ENCODE measurements at regions of chr3 and their contacts with region 1.

Region 1: DNA sequence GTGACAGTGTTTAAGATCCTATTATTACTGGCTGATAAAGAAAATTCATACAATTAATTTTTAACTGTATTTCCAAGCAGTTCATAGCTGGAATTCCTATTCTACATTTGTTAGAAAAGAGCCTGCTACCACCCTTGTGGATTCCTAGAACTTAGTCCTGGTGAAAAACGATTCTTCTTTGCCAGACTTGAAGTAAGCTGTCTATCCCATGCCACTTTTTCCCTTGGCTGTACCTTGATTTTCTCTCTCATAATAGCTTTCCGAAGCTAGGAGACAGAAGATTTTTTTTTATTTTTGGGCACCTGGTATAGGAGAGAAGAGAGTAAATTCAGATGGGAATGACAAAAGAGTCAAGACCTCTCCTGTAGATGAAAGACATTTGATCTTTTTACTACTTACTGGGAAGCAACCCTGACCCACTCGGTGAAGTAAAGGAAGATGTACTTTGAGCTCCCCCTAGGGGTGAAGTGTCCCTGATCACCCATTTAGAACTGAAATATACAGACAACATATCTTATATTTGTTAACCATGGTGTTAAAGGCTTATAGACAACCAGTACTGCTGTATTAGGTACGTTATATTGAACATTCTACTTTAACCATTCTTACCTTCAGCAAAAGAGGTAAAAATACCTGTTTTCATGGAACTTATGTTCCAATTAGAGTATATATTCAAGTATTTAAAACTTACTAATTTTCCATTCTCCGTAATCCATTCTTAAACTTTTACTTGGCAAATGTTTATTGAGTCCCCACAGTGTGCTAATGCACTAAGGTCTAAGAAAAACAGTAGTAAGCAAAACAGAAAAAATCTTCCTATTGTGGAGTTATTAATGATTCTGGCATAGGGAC is 36.2 kb upstream of the C3orf38 start:
- DNase-seq: peak in 8 of 9 donors; percentile 29 to 73 (median 62)
- ATAC-seq: peak; percentile 95
- H3K4me3 ChIP-seq: no peak overlapping the region
- H3K4me3 Mint-ChIP-seq: no peak overlapping the region
- H3K27ac ChIP-seq: no peak overlapping the region
- H3K27ac Mint-ChIP-seq: peak overlapping the region in 3 of 9 donors; percentile 28 to 68 (median 32)
- H3K4me1 ChIP-seq: no peaks in the 10 kb centered on the region
- H3K4me1 Mint-ChIP-seq: peaks cover 6 to 35% (median 26%) of the 10 kb centered on the region in 7 donors
- H3K27me3 ChIP-seq: no peaks in the 10 kb centered on the region
- H3K27me3 Mint-ChIP-seq: no peaks in the 10 kb centered on the region

Region 2: GRCh38 chr3:87350364-87351199 is 763.0 kb before region 1 on chr3:
- CTCF ChIA-PET with region 1: interaction called, 31 read pairs
- POLR2A ChIA-PET with region 1: no interaction called
- intact Hi-C with region 1: loop called (anchors 1 kb)
- DNase-seq: peak in 7 of 9 donors; percentile 11 to 66 (median 47)
- ATAC-seq: peak; percentile 94
- H3K4me3 ChIP-seq: no peak overlapping the region
- H3K4me3 Mint-ChIP-seq: no peak overlapping the region
- H3K27ac ChIP-seq: no peak overlapping the region
- H3K27ac Mint-ChIP-seq: no peak overlapping the region
- H3K4me1 ChIP-seq: no peaks in the 10 kb centered on the region
- H3K4me1 Mint-ChIP-seq: no peaks in the 10 kb centered on the region
- H3K27me3 ChIP-seq: no peaks in the 10 kb centered on the region
- H3K27me3 Mint-ChIP-seq: peaks cover 0 to 8% (median 4%) of the 10 kb centered on the region in 5 donors

Region 3: DNA sequence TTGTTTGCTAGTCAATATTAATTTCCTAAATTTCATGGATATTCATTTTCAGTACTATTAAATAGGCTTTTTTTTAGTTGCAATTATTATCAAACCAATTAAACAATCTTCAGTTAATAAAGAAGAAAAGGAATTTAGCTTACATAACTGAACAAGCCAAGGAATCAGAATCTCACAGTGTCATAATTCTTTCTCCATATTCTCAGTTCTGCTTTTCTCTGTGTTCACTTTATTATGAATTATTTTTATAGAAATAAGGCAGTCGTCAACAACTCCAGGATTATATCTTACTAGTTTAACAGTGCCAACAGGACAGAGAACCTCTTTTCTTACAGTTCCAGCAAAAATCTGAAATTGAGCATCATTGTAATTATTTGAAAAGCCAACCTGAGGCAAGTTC is 276.5 kb before region 1 on chr3:
- CTCF ChIA-PET with region 1: no interaction called
- POLR2A ChIA-PET with region 1: no interaction called
- intact Hi-C with region 1: no loop called
- DNase-seq: no peak
- ATAC-seq: no peak
- H3K4me3 ChIP-seq: no peak overlapping the region
- H3K4me3 Mint-ChIP-seq: no peak overlapping the region
- H3K27ac ChIP-seq: no peak overlapping the region
- H3K27ac Mint-ChIP-seq: no peak overlapping the region
- H3K4me1 ChIP-seq: no peaks in the 10 kb centered on the region
- H3K4me1 Mint-ChIP-seq: no peaks in the 10 kb centered on the region
- H3K27me3 ChIP-seq: no peaks in the 10 kb centered on the region
- H3K27me3 Mint-ChIP-seq: peaks cover 0 to 12% (median 3%) of the 10 kb centered on the region in 5 donors

Region 4: GRCh38 chr3:87900061-87900460 is 213.5 kb before region 1 on chr3:
- CTCF ChIA-PET with region 1: no interaction called
- POLR2A ChIA-PET with region 1: no interaction called
- intact Hi-C with region 1: loop called (anchors 1 to 10 kb)
- DNase-seq: peak in 1 of 9 donors; percentile 5
- ATAC-seq: no peak
- H3K4me3 ChIP-seq: no peak overlapping the region
- H3K4me3 Mint-ChIP-seq: no peak overlapping the region
- H3K27ac ChIP-seq: no peak overlapping the region
- H3K27ac Mint-ChIP-seq: no peak overlapping the region
- H3K4me1 ChIP-seq: no peaks in the 10 kb centered on the region
- H3K4me1 Mint-ChIP-seq: no peaks in the 10 kb centered on the region
- H3K27me3 ChIP-seq: no peaks in the 10 kb centered on the region
- H3K27me3 Mint-ChIP-seq: peaks cover 0 to 4% (median 0%) of the 10 kb centered on the region in 5 donors

Region 5: DNA sequence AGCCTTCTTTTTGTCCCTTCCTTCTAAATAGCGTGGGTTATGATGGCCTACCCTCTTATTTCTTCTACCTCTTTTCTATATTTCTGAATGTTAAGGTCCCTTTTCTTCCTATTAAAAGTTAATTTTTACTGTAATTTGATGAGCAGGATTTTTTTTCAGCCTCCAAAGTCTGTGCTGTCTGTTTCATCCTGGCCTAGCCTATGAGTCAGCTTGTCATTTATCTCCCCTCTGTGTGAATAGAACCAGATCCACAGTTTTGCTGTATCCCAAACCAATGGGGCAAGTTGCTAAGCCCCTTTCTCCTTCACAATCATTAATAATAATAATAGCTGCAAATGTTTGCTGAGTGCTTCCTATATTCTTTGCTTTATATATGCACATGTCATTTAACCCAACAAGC is 18.2 kb after region 1 on chr3:
- CTCF ChIA-PET with region 1: interaction called, 8 read pairs
- POLR2A ChIA-PET with region 1: no interaction called
- intact Hi-C with region 1: loop called in 1 of 2 experiments (anchors 2 kb)
- DNase-seq: no peak
- ATAC-seq: no peak
- H3K4me3 ChIP-seq: no peak overlapping the region
- H3K4me3 Mint-ChIP-seq: no peak overlapping the region
- H3K27ac ChIP-seq: no peak overlapping the region
- H3K27ac Mint-ChIP-seq: no peak overlapping the region
- H3K4me1 ChIP-seq: no peaks in the 10 kb centered on the region
- H3K4me1 Mint-ChIP-seq: peaks cover 0 to 12% (median 6%) of the 10 kb centered on the region in 7 donors
- H3K27me3 ChIP-seq: no peaks in the 10 kb centered on the region
- H3K27me3 Mint-ChIP-seq: no peaks in the 10 kb centered on the region

Region 6: DNA sequence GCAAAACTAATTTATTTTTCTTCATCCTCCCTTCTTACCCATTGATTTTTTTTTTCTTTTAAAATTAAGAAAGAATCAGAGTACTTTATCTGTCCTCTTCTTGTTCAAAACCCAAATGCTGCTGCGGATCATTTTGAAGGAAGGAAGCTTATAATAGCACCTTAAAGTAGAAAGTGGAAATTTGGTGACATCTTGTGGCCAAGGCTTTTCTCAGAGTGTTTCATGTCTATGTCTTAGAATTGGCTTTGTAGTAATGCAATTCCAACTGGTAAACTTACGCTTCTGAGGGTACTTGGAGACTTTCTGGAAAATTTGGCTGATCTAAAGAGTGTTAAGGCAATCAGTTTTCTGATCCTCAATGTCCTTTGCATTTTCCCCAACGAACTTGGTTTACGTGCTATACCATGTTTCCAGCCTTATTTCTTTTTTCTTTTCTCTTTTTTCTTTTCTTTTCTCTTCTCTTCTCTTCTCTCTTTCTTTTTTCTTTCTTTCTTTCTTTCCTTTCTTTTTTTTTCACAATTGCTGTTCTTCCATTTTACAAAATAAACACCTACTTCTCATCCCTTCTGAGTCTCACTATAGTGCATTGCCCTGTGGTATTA is 67.0 kb after region 1 on chr3:
- CTCF ChIA-PET with region 1: interaction called, 3 read pairs
- POLR2A ChIA-PET with region 1: no interaction called
- intact Hi-C with region 1: loop called in 1 of 2 experiments (anchors 2 kb)
- DNase-seq: peak in 7 of 9 donors; percentile 9 to 38 (median 30)
- ATAC-seq: no peak
- H3K4me3 ChIP-seq: no peak overlapping the region
- H3K4me3 Mint-ChIP-seq: no peak overlapping the region
- H3K27ac ChIP-seq: no peak overlapping the region
- H3K27ac Mint-ChIP-seq: no peak overlapping the region
- H3K4me1 ChIP-seq: no peaks in the 10 kb centered on the region
- H3K4me1 Mint-ChIP-seq: peaks cover 0 to 8% (median 0%) of the 10 kb centered on the region in 7 donors
- H3K27me3 ChIP-seq: no peaks in the 10 kb centered on the region
- H3K27me3 Mint-ChIP-seq: peaks cover 0 to 14% (median 4%) of the 10 kb centered on the region in 5 donors